AG04449 (cell line): ENCODE measurements at regions of chr17 and their contacts with region 1.

Region 1: GRCh38 chr17:49556223-49556971 is 19.3 kb upstream of the NXPH3 start:
- DNase-seq: no peak
- H3K4me3 ChIP-seq: no peak overlapping the region
- CTCF ChIP-seq: peak; percentile 99

Region 2: GRCh38 chr17:49407981-49408501 is 148.4 kb before region 1 on chr17:
- CTCF ChIA-PET with region 1: interaction called, 210 read pairs
- POLR2A ChIA-PET with region 1: no interaction called
- DNase-seq: no peak
- H3K4me3 ChIP-seq: no peak overlapping the region
- CTCF ChIP-seq: peak; percentile 89

Region 3: GRCh38 chr17:49443862-49444261 is 112.5 kb before region 1 on chr17:
- CTCF ChIA-PET with region 1: interaction called, 376 read pairs
- POLR2A ChIA-PET with region 1: no interaction called
- DNase-seq: no peak
- H3K4me3 ChIP-seq: no peak overlapping the region
- CTCF ChIP-seq: no peak

Region 4: GRCh38 chr17:49508061-49508865 is 48.1 kb before region 1 on chr17:
- CTCF ChIA-PET with region 1: interaction called, 28 read pairs
- POLR2A ChIA-PET with region 1: no interaction called
- DNase-seq: no peak
- H3K4me3 ChIP-seq: no peak overlapping the region
- CTCF ChIP-seq: no peak

Region 5: GRCh38 chr17:49575579-49576087 is 19.2 kb after region 1 on chr17 and contains the start of gene NXPH3:
- CTCF ChIA-PET with region 1: interaction called, 115 read pairs
- POLR2A ChIA-PET with region 1: no interaction called
- DNase-seq: no peak
- H3K4me3 ChIP-seq: peak within 1 kb of the TSS; percentile 64
- CTCF ChIP-seq: peak; percentile 29

Region 6: GRCh38 chr17:49746791-49747490 is 190.5 kb after region 1 on chr17:
- CTCF ChIA-PET with region 1: interaction called, 15 read pairs
- POLR2A ChIA-PET with region 1: no interaction called
- DNase-seq: no peak
- H3K4me3 ChIP-seq: no peak overlapping the region
- CTCF ChIP-seq: no peak